HepG2 (cell line): ENCODE measurements at regions of chr1 and their contacts with region 1.

Region 1: DNA sequence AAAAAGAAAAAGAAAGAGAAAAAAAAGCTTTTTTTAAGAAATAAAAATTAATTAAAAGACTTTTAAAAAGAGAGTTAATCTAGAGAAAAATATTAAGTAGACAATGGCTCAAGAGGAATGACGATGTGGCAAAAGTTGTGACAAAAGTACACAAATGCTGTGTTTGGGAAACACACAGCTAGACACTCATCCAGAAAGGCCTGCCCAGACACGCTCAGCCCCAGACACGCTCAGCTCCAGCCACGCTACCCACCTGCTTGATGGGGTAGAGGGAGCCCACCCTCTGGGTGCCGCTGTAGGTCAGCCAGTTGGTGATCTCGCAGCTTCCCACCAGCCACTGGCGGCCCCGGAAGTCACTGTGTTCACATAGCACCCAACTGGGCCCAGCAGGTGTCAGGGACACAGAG is 10.2 kb downstream of the CD52 start:
- DNase-seq: no peak
- ATAC-seq: peak; percentile 65
- H3K4me3 ChIP-seq: no peak overlapping the region
- H3K27ac ChIP-seq: no peak overlapping the region
- H3K4me1 ChIP-seq: no peaks in the 10 kb centered on the region
- H3K27me3 ChIP-seq: no peaks in the 10 kb centered on the region
- CTCF ChIP-seq: peak; percentile 67
- EP300 ChIP-seq: no peak
- POLR2A ChIP-seq: no peak
- RAD21 ChIP-seq: no peak

Region 2: GRCh38 chr1:26363549-26364448 is 35.8 kb after region 1 on chr1:
- CTCF ChIA-PET with region 1: interaction called, 12 read pairs
- POLR2A ChIA-PET with region 1: interaction called, 9 read pairs
- in situ Hi-C with region 1: loop called (anchors 5 kb)
- intact Hi-C with region 1: no loop called
- DNase-seq: peak; percentile 71
- ATAC-seq: peak; percentile 77
- H3K4me3 ChIP-seq: 0 out of 6 replicates have a peak overlapping the region, but pooled peaks of 1 of the 3 experiments have one; percentile 18
- H3K27ac ChIP-seq: no peak overlapping the region
- H3K4me1 ChIP-seq: peaks cover 57% of the 10 kb centered on the region
- H3K27me3 ChIP-seq: peaks cover 0 to 1% of the 10 kb centered on the region in 2 experiments; a peak in 2 of 5 replicates
- CTCF ChIP-seq: peak; percentile 95
- EP300 ChIP-seq: no peak
- POLR2A ChIP-seq: no peak
- RAD21 ChIP-seq: peak; percentile 96